BJ (cell line): ENCODE measurements at regions of chr6 and their contacts with region 1.

Region 1: GRCh38 chr6:125858427-125859320 is 67.9 kb downstream of the NCOA7 start:
- DNase-seq: no peak
- H3K4me3 ChIP-seq: no peak overlapping the region
- H3K27me3 ChIP-seq: no peaks in the 10 kb centered on the region
- CTCF ChIP-seq: peak; percentile 90

Region 2: GRCh38 chr6:125631165-125631564 is 227.5 kb before region 1 on chr6:
- CTCF ChIA-PET with region 1: no interaction called
- POLR2A ChIA-PET with region 1: no interaction called
- DNase-seq: no peak
- H3K4me3 ChIP-seq: no peak overlapping the region
- H3K27me3 ChIP-seq: no peaks in the 10 kb centered on the region; the same call in 1 of the 2 replicates
- CTCF ChIP-seq: no peak

Region 3: GRCh38 chr6:125844989-125845388 is 13.7 kb before region 1 on chr6:
- CTCF ChIA-PET with region 1: interaction called, 14 read pairs
- POLR2A ChIA-PET with region 1: no interaction called
- DNase-seq: no peak
- H3K4me3 ChIP-seq: no peak overlapping the region
- H3K27me3 ChIP-seq: no peaks in the 10 kb centered on the region
- CTCF ChIP-seq: no peak